ENCODE measurements at regions of chr3 and their contacts with region 1.

Region 1: GRCh38 chr3:8255725-8256124 is 245.9 kb upstream of the LMCD1 start:
- DNase-seq: no peak
- H3K4me3 ChIP-seq: no peak overlapping the region
- CTCF ChIP-seq: no peak
- POLR2A ChIP-seq: no peak

Region 2: GRCh38 chr3:7025581-7026300 is 1230.0 kb before region 1 on chr3:
- intact Hi-C with region 1: loop called (anchors 5 kb)
- DNase-seq: no peak
- H3K4me3 ChIP-seq: no peak overlapping the region
- CTCF ChIP-seq: no peak
- POLR2A ChIP-seq: no peak

Region 3: GRCh38 chr3:8366214-8366810 is 110.6 kb after region 1 on chr3:
- intact Hi-C with region 1: no loop called
- DNase-seq: no peak
- H3K4me3 ChIP-seq: no peak overlapping the region
- CTCF ChIP-seq: no peak
- POLR2A ChIP-seq: no peak